ENCODE measurements at regions of chr1 and their contacts with region 1.

Region 1: GRCh38 chr1:45583264-45583665 is 576 bp upstream of the NASP start:
- DNase-seq: peak; percentile 95 to 97 (median 96)
- H3K4me3 ChIP-seq: peak overlapping the region; percentile 99
- H3K4me3 Mint-ChIP-seq: peak overlapping the region; percentile 93 to 100 (median 100)
- H3K27ac ChIP-seq: peak overlapping the region; percentile 88
- H3K27ac Mint-ChIP-seq: peak overlapping the region; percentile 94 to 100 (median 99)
- H3K4me1 ChIP-seq: peaks cover 26% of the 10 kb centered on the region
- H3K4me1 Mint-ChIP-seq: peaks cover 20 to 42% (median 28%) of the 10 kb centered on the region in 4 donors
- H3K27me3 ChIP-seq: no peaks in the 10 kb centered on the region
- H3K27me3 Mint-ChIP-seq: no peaks in the 10 kb centered on the region

Region 2: GRCh38 chr1:44799770-44800584 is 783.3 kb before region 1 on chr1 and contains the start of gene PLK3:
- CTCF ChIA-PET with region 1: no interaction called
- POLR2A ChIA-PET with region 1: interaction called, 5 read pairs
- intact Hi-C with region 1: loop called (anchors 10 kb)
- DNase-seq: peak; percentile 99 to 100 (median 99)
- H3K4me3 ChIP-seq: peak within 1 kb of the TSS; percentile 77 to 83
- H3K4me3 Mint-ChIP-seq: peak within 1 kb of the TSS; percentile 89 to 99 (median 96)
- H3K27ac ChIP-seq: peak within 1 kb of the TSS; percentile 96
- H3K27ac Mint-ChIP-seq: peak within 1 kb of the TSS; percentile 82 to 100 (median 99)
- H3K4me1 ChIP-seq: peaks cover 37% of the 10 kb centered on the region
- H3K4me1 Mint-ChIP-seq: peaks cover 23 to 48% (median 31%) of the 10 kb centered on the region in 4 donors
- H3K27me3 ChIP-seq: no peaks in the 10 kb centered on the region
- H3K27me3 Mint-ChIP-seq: no peaks in the 10 kb centered on the region
- total RNA-seq, gene PLK3: 151 to 153 TPM

Region 3: GRCh38 chr1:45512641-45513054 is 70.6 kb before region 1 on chr1:
- CTCF ChIA-PET with region 1: interaction called, 10 read pairs
- POLR2A ChIA-PET with region 1: interaction called, 4 read pairs
- intact Hi-C with region 1: no loop called
- DNase-seq: peak; percentile 42 to 60 (median 47)
- H3K4me3 ChIP-seq: no peak overlapping the region
- H3K4me3 Mint-ChIP-seq: no peak overlapping the region
- H3K27ac ChIP-seq: no peak overlapping the region
- H3K27ac Mint-ChIP-seq: peak overlapping the region in 3 of 7 donors; percentile 18 to 68 (median 24)
- H3K4me1 ChIP-seq: no peaks in the 10 kb centered on the region
- H3K4me1 Mint-ChIP-seq: peaks cover 3 to 14% (median 7%) of the 10 kb centered on the region in 4 donors
- H3K27me3 ChIP-seq: no peaks in the 10 kb centered on the region
- H3K27me3 Mint-ChIP-seq: no peaks in the 10 kb centered on the region

Region 4: DNA sequence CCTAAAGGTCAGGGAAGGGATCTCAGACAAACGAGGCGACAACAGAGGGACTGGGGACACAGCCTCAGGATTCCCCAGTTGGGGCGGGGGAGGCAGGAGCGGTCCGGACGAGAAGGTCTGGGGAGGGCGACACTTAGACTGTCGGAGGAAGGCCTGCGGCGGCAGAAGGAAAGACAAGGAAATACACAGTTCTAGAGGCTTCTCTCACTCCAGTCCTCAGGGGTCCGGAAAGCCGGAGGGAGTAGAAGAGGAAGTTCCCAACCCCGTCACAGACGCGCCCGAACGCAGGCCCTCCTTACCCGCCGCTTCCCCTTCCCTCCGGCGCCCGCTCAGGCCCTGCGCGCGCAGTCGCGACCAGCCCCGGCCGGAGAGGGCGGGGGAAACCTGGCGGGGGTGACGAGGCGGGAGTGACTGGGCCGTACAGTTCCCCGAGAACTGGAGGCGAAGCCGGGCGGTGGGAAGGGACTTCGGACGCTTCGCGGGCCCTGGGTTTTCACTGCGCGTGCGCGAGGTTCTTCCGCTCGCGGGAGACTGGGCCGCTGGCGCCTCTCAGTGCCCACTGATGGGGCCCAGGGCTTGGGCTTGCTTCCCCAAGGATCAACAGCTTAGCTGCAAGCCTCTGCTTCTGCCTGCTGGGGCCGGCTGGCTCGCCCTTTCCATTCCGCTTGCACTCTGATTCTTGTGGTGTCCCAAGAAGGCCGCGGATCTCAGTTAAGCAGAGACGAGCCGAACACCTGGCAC is 167.2 kb after region 1 on chr1 and contains the start of gene IPP:
- CTCF ChIA-PET with region 1: no interaction called
- POLR2A ChIA-PET with region 1: interaction called, 7 read pairs
- intact Hi-C with region 1: loop called (anchors 1 kb)
- DNase-seq: peak; percentile 89 to 92 (median 90)
- H3K4me3 ChIP-seq: peak within 1 kb of the TSS; percentile 84 to 86
- H3K4me3 Mint-ChIP-seq: peak within 1 kb of the TSS; percentile 94 to 100 (median 98)
- H3K27ac ChIP-seq: peak within 1 kb of the TSS; percentile 93
- H3K27ac Mint-ChIP-seq: peak within 1 kb of the TSS; percentile 98 to 100 (median 99)
- H3K4me1 ChIP-seq: peaks cover 22% of the 10 kb centered on the region
- H3K4me1 Mint-ChIP-seq: peaks cover 15 to 44% (median 30%) of the 10 kb centered on the region in 4 donors
- H3K27me3 ChIP-seq: no peaks in the 10 kb centered on the region
- H3K27me3 Mint-ChIP-seq: no peaks in the 10 kb centered on the region
- total RNA-seq, gene IPP: 17.3 to 19.7 TPM

Measured in CD4-positive, alpha-beta memory T cell (primary cell).